H1 (cell line): ENCODE measurements at regions of chr9 and their contacts with region 1.

Region 1: DNA sequence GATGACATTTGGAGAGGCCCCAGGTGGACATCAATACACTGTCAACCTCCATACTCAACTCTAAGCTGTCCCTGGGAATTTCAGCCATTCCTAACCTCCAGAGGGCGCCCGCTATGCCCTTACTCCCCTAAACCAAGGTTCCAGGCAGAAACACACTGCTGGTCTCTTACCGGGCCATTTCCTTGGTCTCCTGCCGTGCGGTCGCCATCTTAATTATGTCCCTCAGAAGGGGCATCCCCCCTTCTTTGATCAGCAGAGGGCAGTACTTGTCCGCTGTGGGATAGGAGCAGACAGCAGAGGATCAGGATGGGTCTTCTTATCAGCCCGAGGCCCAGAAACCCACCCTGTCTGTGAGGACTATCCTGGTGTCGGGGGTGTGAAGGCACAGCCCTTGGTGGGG is 9.3 kb upstream of the ZDHHC12 start:
- DNase-seq: peak; percentile 91 to 94
- H3K4me3 ChIP-seq: no peak overlapping the region
- H3K27ac ChIP-seq: no peak overlapping the region
- H3K4me1 ChIP-seq: peaks cover 0 to 1% (median 0%) of the 10 kb centered on the region in 4 experiments; a peak in 1 of 7 replicates
- H3K27me3 ChIP-seq: no peaks in the 10 kb centered on the region
- CTCF ChIP-seq: peak; percentile 55 to 98 (median 92)
- EP300 ChIP-seq: no peak
- POLR2A ChIP-seq: no peak
- RAD21 ChIP-seq: peak; percentile 86 to 88

Region 2: DNA sequence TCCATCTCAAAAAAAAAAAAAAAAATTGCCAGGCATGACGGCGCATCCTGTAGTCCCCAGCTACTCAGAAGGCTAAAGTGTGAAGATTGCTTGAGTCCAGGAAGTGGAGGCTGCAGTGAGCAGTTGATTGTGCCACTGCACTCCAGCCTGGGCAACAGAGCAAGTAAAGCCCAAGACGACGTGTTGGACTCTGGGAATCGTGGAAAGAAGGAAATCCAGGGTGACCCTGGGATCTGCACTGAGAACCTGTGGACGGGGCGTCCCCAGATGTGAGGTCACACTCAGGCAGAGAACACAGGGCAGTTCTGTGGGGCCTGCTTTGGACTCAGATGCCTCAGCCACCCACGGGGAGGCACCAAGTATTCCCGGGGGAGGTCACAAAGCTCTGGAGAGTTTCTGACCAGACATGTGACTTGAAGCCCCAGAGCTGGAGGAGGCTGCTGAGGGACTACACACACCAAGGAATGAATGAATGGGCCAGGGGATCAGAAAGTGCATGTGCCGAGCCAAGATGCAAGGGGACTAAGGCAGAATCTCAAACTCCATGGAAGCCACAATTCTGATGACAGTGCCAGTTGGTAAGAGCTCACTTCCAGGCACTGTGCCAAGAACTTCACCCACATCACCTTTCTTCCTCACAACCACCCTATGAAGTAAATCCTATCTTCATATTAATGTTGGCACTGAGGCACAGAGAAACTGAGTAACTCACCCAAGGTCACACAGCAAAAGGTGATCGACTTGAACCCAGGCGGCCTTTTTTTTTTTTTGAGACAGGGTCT is 89.5 kb before region 1 on chr9:
- CTCF ChIA-PET with region 1: interaction called, 12 read pairs
- POLR2A ChIA-PET with region 1: interaction called, 3 read pairs
- DNase-seq: no peak
- H3K4me3 ChIP-seq: no peak overlapping the region
- H3K27ac ChIP-seq: no peak overlapping the region
- H3K4me1 ChIP-seq: no peaks in the 10 kb centered on the region
- H3K27me3 ChIP-seq: no peaks in the 10 kb centered on the region
- CTCF ChIP-seq: no peak
- EP300 ChIP-seq: no peak
- POLR2A ChIP-seq: no peak
- RAD21 ChIP-seq: no peak

Region 3: DNA sequence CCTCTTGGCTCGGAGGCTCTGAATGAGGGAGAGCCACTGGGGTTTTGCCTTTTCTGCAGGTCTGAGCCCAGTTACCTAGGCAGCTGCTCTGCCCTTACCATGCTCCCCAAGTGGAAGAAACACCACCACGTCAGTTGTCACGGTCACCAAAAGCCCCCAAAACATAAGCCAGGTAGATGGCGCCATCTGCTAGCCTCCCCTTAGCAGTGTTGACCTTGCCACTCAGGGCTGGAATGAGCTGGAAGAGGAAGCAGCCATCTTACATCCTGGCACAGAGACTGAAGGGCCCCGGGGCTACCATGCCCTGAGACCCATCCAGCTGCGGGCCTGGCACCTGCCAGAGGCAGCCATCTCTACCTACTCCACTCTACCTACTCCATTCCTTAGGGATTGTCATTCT is 31.1 kb after region 1 on chr9:
- CTCF ChIA-PET with region 1: interaction called, 19 read pairs
- POLR2A ChIA-PET with region 1: interaction called, 3 read pairs
- DNase-seq: peak in 1 of 2 experiments; percentile 56
- H3K4me3 ChIP-seq: no peak overlapping the region
- H3K27ac ChIP-seq: peak overlapping the region; percentile 30; the same call in 1 of the 2 replicates
- H3K4me1 ChIP-seq: peaks cover 0 to 3% (median 2%) of the 10 kb centered on the region in 4 experiments; a peak in 2 of 7 replicates
- H3K27me3 ChIP-seq: no peaks in the 10 kb centered on the region
- CTCF ChIP-seq: peak; percentile 49 to 58 (median 53)
- EP300 ChIP-seq: no peak
- POLR2A ChIP-seq: no peak
- RAD21 ChIP-seq: peak; percentile 63 to 69

Region 4: DNA sequence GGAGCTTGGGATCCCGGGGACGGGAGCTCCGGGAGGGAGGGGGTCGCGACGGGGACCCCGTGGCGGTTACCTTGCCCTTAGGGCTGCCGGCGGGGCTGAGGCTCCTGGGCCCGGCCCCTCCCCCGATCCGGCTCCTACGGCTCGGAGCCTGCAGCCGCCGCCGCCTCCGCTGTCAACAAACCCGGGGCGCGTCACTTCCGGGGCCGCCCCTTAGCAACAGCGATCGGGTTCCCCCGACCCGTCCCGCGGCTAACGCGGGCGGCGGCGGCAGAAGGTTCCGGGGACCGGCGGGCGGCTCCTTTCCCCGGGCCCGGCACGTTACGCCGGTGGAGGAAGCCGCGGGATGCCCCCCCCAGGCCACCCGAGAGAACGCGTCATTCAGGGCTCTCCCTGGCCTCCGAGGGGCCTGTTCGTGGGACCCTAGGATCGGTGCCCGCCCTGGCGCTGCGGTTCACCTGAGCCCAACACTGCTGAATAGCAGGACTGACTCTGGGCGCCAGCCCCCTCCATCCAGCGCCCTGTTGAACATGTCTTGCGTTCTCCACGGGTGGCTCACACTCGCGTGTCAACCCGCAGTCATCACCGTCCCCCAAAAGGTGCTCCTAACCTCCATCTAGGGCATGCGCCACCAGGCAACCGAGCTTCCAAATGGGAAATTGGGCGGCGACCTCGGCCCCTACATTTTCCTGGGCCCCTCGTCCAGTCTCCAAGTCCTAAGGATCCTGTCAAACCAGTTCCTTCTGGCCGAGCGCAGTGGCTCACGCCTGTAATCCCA is 38.7 kb after region 1 on chr9 and contains the start of gene ZER1:
- CTCF ChIA-PET with region 1: interaction called, 18 read pairs
- POLR2A ChIA-PET with region 1: interaction called, 5 read pairs
- DNase-seq: peak; percentile 53 to 97
- H3K4me3 ChIP-seq: peak within 1 kb of the TSS; percentile 75 to 97 (median 90)
- H3K27ac ChIP-seq: peak within 1 kb of the TSS; percentile 85
- H3K4me1 ChIP-seq: peaks cover 0 to 3% (median 1%) of the 10 kb centered on the region in 4 experiments; a peak in 3 of 7 replicates
- H3K27me3 ChIP-seq: no peaks in the 10 kb centered on the region
- CTCF ChIP-seq: no peak
- EP300 ChIP-seq: peak in 1 of 2 experiments; percentile 87; a peak in 1 of 3 replicates
- POLR2A ChIP-seq: peak in 1 of 2 experiments; percentile 79; a peak in 2 of 3 replicates
- RAD21 ChIP-seq: peak in 1 of 2 experiments; percentile 7; a peak in 1 of 4 replicates
- total RNA-seq, gene ZER1: 20.5 and 22.6 TPM in 2 replicates

Region 5: GRCh38 chr9:128792978-128793686 is 59.9 kb after region 1 on chr9:
- CTCF ChIA-PET with region 1: interaction called, 10 read pairs
- POLR2A ChIA-PET with region 1: interaction called, 4 read pairs
- DNase-seq: no peak
- H3K4me3 ChIP-seq: no peak overlapping the region
- H3K27ac ChIP-seq: no peak overlapping the region
- H3K4me1 ChIP-seq: peaks cover 0 to under 1% (median 0%) of the 10 kb centered on the region in 4 experiments; a peak in 1 of 7 replicates
- H3K27me3 ChIP-seq: no peaks in the 10 kb centered on the region
- CTCF ChIP-seq: no peak
- EP300 ChIP-seq: no peak
- POLR2A ChIP-seq: no peak
- RAD21 ChIP-seq: no peak

Region 6: DNA sequence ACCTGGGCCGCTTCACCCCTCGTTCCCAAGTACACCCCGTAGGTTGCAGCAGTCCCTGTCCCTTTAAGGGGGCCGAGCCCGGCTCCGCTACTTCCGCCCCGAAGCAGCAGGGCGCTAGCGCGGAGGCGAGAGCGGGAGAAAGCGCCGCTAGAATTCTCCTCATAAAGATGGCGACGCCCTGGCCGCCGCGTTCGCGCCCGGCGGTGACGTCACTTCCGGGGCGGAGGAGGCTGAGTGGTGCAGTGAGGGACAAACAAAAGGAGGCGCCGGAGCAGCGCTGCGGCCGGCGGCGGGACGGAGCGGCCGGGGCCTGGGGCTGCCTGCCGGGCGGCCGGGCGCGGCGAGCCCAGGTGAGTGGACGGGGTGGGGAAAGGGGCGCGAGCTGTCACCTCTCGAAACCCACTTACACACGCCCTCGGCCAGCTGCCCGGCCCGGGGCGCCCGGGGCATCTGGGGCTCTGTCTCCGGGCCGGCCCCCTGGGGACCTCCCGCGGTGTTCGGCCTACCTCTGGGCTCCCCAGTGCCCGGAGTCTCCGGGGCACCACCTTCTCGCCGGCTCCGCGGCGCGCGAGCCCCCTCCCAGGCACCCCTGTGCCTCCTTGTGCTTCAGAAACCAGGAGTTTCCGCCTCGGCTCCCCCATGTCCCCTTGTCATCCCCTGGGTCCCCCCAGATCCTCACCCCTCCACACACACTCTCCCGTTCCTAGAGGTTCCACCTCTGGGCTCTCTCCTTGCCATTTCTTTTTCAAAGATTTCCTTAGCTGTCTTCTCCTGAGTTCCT is 148.8 kb after region 1 on chr9 and contains the starts of genes KYAT1 and LRRC8A:
- CTCF ChIA-PET with region 1: interaction called, 12 read pairs
- POLR2A ChIA-PET with region 1: no interaction called
- DNase-seq: peak; percentile 87 to 98
- H3K4me3 ChIP-seq: peak within 1 kb of the TSS; percentile 82 to 99 (median 96)
- H3K27ac ChIP-seq: peak within 1 kb of the TSS; percentile 84
- H3K4me1 ChIP-seq: peaks cover 3 to 19% (median 7%) of the 10 kb centered on the region in 4 experiments; a peak in 6 of 7 replicates
- H3K27me3 ChIP-seq: no peaks in the 10 kb centered on the region
- CTCF ChIP-seq: no peak
- EP300 ChIP-seq: peak in 1 of 2 experiments; percentile 54; a peak in 1 of 3 replicates
- POLR2A ChIP-seq: peak; percentile 79 to 91
- RAD21 ChIP-seq: peak in 1 of 2 experiments; percentile 0; a peak in 1 of 4 replicates
- total RNA-seq, gene KYAT1: 28.5 and 30.4 TPM in 2 replicates
- total RNA-seq, gene LRRC8A: 103 and 106 TPM in 2 replicates

Region 7: DNA sequence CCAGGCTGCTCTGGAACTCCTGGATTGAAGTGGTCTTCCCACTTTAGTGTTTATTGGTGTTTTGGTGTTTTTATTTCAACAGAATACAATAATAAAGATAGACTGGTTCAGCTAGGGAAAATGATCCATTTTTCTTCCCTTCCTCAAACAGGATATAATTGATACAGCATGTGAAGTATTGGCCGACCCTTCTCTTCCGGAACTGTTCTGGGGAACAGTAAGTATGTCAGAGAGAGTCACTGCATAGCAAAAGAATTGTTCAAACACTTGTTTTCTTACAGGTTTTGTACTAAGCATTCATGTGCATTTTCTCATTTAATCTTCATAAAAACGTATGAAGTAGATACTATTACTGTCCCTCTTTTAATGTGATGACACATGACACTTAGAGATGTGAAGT is 245.9 kb after region 1 on chr9:
- CTCF ChIA-PET with region 1: no interaction called
- POLR2A ChIA-PET with region 1: no interaction called
- DNase-seq: no peak
- H3K4me3 ChIP-seq: no peak overlapping the region
- H3K27ac ChIP-seq: no peak overlapping the region
- H3K4me1 ChIP-seq: no peaks in the 10 kb centered on the region
- H3K27me3 ChIP-seq: no peaks in the 10 kb centered on the region
- CTCF ChIP-seq: no peak
- EP300 ChIP-seq: no peak
- POLR2A ChIP-seq: no peak
- RAD21 ChIP-seq: no peak